Right cardiac atrium (tissue), 5 donors: ENCODE measurements at regions of chr2 and their contacts with region 1.

Region 1: DNA sequence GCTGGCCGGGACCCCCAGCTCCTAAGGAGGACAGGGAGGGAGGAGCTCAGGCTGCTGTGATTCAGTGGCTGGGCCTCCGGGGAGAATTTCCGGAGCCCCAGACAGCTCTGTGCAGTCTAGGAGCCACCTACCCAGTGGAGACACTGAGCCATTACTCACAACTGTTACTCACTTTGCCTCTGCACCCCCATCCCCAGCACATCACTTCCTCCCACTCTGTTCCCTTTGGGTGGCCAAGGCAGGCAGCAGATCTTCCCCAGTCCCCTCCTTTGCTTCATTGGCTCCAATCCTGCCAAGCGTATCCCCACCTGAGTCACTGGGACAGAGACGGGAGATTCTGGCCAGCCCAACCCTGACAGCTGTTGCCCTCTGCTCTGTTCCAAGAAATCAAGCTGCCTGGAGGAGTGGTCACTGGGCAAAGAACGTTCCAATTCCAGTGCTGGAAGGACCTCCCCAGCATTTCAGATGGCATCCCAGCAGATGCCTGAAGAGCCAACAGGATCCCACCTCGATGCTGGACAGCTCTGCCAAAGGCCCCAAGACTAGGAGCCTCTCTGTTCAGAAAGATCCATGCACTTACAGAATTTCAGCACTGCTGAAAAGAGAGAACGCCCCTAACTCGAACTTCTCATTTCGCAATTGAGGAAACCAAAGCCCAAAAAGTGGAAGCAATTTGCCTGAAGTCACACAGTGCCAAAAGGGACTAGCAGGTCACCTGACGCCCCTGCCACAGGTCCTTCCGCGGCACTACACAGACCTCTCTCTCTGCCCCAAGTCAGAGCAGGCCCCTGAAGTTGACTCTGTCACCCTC is 68.3 kb downstream of the TNS1 start:
- DNase-seq: peak; percentile 77 to 80 (median 79)
- ATAC-seq: peak; percentile 13 to 54
- H3K4me3 ChIP-seq: peak overlapping the region; percentile 3
- H3K27ac ChIP-seq: peak overlapping the region; percentile 95
- H3K4me1 ChIP-seq: peaks cover 78% of the 10 kb centered on the region
- H3K27me3 ChIP-seq: no peaks in the 10 kb centered on the region

Region 2: GRCh38 chr2:217851191-217852020 is 83.1 kb before region 1 on chr2:
- intact Hi-C with region 1: no loop called
- DNase-seq: peak; percentile 60 to 78 (median 78)
- ATAC-seq: peak; percentile 8 to 22
- H3K4me3 ChIP-seq: no peak overlapping the region
- H3K27ac ChIP-seq: peak overlapping the region; percentile 28
- H3K4me1 ChIP-seq: peaks cover 45% of the 10 kb centered on the region
- H3K27me3 ChIP-seq: no peaks in the 10 kb centered on the region

Region 3: DNA sequence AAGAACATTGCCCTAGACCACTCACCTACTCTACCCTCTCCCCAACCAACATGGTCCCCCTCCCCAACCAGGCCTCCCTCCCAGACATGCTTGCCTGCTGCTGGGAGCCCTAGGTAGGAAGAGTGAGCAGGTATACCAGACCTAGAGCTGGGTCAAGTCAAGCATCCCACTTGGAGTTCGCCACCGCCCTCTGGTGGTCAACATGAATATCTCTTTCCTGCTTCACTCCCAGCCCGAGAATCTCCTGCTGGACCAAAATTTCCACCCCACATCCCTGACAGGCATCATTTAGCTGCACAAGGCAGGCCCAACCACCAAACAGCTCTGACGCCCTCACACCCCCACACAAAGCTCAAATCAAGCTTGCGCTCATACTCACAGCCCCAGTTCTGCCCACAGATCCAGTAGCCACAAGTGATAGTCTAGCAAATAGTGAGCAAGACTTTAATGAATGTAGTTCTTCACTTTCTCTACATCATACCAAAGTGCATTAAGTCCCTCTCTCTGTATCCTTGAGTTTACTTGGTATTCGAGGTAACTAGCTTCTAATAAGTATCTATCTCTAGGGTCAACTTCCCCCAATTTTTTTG is 47.7 kb before region 1 on chr2:
- intact Hi-C with region 1: loop called in 1 of 4 experiments (anchors 10 kb)
- DNase-seq: peak; percentile 79 to 85 (median 80)
- ATAC-seq: peak; percentile 26 to 28
- H3K4me3 ChIP-seq: no peak overlapping the region
- H3K27ac ChIP-seq: peak overlapping the region; percentile 42
- H3K4me1 ChIP-seq: peaks cover 31% of the 10 kb centered on the region
- H3K27me3 ChIP-seq: no peaks in the 10 kb centered on the region

Region 4: DNA sequence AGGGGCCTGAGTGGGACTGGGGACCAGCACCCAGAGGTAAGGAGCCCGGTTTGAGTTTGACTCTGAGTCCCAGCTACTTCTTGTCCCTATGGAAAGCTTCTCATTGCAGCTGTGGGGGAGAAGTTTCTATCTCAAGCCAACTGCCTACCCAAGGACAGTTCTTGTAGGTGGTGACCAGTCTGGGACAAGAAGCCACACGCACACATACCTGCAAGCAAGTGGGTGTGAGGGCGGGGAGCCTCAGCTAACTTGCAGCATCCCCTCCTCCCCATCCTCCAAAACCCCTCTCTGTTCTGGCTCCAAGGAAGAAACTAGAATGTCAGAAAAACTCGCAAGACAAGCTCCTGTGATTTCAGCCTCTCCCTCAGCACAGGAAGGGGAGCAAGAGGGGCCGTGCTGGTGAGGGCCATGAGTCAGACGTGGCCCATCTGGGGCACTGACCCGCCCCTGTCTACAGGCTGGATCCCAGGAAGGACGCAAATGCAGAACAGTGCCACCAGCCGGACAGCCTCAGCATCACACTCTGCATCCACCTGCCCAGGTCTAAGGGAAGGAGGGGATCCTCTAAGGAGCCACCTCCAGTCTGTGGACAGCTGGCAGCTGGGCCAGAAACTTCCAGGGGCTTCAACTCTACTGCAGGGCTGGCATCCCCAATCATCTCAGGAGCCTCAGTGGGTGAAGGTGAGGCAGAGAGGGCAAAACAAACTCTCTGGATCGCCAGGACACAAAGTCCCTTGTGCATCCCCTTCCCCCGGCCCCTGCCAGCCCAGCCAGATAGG is 35.1 kb before region 1 on chr2:
- intact Hi-C with region 1: loop called in 1 of 4 experiments (anchors 5 kb)
- DNase-seq: peak; percentile 80 to 86 (median 84)
- ATAC-seq: peak; percentile 12 to 28
- H3K4me3 ChIP-seq: no peak overlapping the region
- H3K27ac ChIP-seq: peak overlapping the region; percentile 88
- H3K4me1 ChIP-seq: peaks cover 63% of the 10 kb centered on the region
- H3K27me3 ChIP-seq: no peaks in the 10 kb centered on the region